Esophagus muscularis mucosa (tissue), 4 donors: ENCODE measurements at regions of chr13 and their contacts with region 1.

Region 1: GRCh38 chr13:99269627-99270241 is 11.6 kb upstream of the GPR18 start:
- DNase-seq: no peak
- H3K4me3 ChIP-seq: no peak overlapping the region
- H3K27ac ChIP-seq: no peak overlapping the region
- H3K4me1 ChIP-seq: peaks cover 6 to 32% (median 15%) of the 10 kb centered on the region in 4 donors
- H3K27me3 ChIP-seq: no peaks in the 10 kb centered on the region
- CTCF ChIP-seq: peak; percentile 75 to 87 (median 78)
- EP300 ChIP-seq: no peak
- POLR2A ChIP-seq: no peak

Region 2: DNA sequence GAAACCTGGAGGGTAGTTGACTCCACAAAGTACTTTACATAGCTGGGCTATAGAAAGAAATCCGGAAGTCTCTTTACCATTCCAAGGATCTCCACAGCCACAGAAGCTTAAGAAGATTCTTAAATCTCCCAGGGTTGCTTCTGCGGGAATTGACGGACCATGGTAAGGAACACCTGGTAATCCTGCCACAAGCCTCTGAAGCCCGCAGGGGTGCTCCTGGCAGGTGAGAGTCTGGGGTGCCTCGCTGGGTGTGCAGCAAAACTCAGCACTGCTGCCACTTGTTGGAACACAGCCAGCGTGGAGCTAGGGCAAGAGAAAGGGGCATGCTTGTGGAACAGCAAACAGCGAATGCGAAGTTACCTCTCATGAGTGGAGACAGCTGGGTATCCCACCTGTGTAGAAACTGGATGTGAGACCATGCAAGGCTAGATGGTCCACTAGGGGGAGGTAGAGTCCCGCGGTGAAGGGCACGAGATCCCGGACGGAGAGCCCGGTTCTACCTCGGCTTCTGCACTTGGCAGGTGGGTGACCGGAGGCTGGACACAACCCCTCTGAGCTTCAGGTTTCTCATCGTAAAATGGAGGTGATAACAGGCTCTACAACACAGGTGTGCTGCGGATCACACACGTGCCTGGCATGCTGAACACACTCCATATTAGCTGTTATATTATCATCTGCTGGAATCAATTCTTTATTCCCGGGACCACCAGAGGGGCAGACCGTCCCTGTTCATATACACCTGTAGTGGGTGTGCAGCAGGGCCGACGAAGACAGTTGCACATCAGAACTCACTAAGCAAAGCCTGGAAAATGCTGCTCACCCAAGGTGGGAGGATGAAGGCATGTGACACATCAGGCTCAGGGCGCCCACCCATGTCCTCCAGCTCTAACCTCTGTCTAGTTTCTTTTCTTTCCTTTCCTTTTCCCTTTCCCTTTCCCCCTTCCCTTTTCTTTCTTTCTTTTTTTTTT is 93.1 kb before region 1 on chr13:
- intact Hi-C with region 1: loop called (anchors 2 kb)
- DNase-seq: peak; percentile 95
- H3K4me3 ChIP-seq: no peak overlapping the region
- H3K27ac ChIP-seq: no peak overlapping the region
- H3K4me1 ChIP-seq: peaks cover 0 to 7% (median 7%) of the 10 kb centered on the region in 4 donors
- H3K27me3 ChIP-seq: peaks cover 0 to 14% (median 0%) of the 10 kb centered on the region in 4 donors
- CTCF ChIP-seq: peak; percentile 78 to 89 (median 89)
- EP300 ChIP-seq: no peak
- POLR2A ChIP-seq: no peak

Region 3: DNA sequence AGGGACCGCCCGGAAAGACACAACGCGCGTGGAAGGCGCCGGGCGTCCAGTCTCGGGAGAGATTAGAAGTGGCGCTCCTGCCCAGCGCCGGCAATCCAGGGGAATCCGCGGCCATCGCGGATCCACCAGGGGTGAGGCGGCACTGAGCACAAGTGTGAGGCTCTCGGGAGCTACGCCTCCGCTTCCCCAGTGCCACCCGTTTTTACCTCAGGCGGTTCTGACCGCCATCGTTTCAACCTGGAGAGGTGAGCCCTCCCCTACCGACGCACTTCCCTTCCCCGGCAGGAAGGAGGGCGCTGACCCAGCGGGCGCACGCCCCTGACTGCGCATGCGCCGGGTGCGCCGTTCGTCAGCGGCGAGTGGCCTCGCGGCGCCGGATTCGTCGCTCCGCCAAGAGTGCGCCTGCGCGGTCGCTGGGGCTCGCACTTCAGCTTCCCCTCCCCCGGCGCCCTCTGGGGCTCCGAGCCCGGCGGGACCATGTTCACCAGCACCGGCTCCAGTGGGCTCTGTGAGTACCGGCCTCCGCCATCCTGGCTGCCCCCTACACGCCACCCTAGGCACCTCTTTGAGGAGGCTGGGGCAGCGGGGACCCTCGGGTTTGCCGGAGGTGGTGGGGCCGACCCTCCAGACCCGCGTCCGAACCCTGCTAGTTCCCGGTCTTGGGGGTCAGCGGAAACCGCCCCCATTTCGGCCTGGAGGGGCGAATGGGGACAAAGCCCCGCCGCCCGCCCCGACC is 69.1 kb before region 1 on chr13 and contains the start of gene UBAC2:
- intact Hi-C with region 1: loop called (anchors 5 kb)
- DNase-seq: peak; percentile 95
- H3K4me3 ChIP-seq: peak within 1 kb of the TSS; percentile 72 to 98 (median 82)
- H3K27ac ChIP-seq: peak within 1 kb of the TSS; percentile 94 to 99 (median 96)
- H3K4me1 ChIP-seq: peaks cover 24 to 39% (median 32%) of the 10 kb centered on the region in 4 donors
- H3K27me3 ChIP-seq: peaks cover 0 to 3% (median 0%) of the 10 kb centered on the region in 4 donors
- CTCF ChIP-seq: peak in 1 of 3 experiments; percentile 17
- EP300 ChIP-seq: no peak
- POLR2A ChIP-seq: peak; percentile 86
- total RNA-seq, gene UBAC2: 42.6 to 62.1 (median 50.9) TPM

Region 4: DNA sequence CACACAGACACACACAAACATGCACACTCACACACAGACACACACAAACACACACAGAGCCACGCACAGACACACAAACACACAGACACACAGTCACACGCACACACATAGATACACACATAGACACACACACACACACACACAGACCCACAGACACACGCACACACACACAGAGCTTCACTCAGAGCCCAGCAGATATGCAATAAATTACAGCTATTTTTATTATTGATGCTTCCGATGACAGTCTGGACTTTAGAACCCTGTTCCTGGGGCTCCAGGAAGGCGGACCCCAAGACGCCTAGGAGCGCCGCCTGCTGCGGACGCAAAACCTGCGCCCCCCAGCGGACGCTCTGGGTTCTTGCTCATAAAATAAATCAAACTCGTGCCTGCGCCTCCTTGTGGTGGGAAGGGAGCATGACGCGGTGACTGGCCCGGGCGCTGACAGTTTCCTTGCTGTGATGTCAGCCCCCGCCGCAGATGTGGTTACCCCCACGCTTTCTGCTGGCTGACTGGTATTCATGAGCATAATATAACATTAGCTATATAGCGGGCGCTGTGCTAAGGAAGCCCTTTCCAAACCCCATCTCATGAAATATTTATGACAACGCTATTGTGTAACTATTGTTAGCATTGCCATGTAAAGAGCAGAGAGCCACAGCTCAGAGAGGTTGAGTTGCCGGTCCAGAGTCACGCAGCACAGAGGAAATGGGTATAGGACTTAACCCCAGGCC is 167.1 kb after region 1 on chr13:
- intact Hi-C with region 1: loop called (anchors 2 kb)
- DNase-seq: peak; percentile 98
- H3K4me3 ChIP-seq: peak overlapping the region in 2 of 4 donors; percentile 8 to 34
- H3K27ac ChIP-seq: no peak overlapping the region
- H3K4me1 ChIP-seq: peaks cover 0 to 28% (median 23%) of the 10 kb centered on the region in 4 donors
- H3K27me3 ChIP-seq: peaks cover 0 to 11% (median 0%) of the 10 kb centered on the region in 4 donors
- CTCF ChIP-seq: peak in 2 of 3 experiments; percentile 100
- EP300 ChIP-seq: no peak
- POLR2A ChIP-seq: no peak

Region 5: GRCh38 chr13:99501184-99501847 is 231.6 kb after region 1 on chr13 and contains the start of gene TM9SF2:
- intact Hi-C with region 1: loop called (anchors 10 kb)
- DNase-seq: peak; percentile 98
- H3K4me3 ChIP-seq: peak within 1 kb of the TSS; percentile 73 to 99 (median 84)
- H3K27ac ChIP-seq: peak within 1 kb of the TSS; percentile 79 to 90 (median 89)
- H3K4me1 ChIP-seq: peaks cover 59 to 79% (median 63%) of the 10 kb centered on the region in 4 donors
- H3K27me3 ChIP-seq: no peaks in the 10 kb centered on the region
- CTCF ChIP-seq: peak in 1 of 3 experiments; percentile 19
- EP300 ChIP-seq: no peak
- POLR2A ChIP-seq: peak; percentile 67
- total RNA-seq, gene TM9SF2: 65.6 to 86.9 (median 71.8) TPM